ENCODE measurements at regions of chrX and their contacts with region 1.

Region 1: DNA sequence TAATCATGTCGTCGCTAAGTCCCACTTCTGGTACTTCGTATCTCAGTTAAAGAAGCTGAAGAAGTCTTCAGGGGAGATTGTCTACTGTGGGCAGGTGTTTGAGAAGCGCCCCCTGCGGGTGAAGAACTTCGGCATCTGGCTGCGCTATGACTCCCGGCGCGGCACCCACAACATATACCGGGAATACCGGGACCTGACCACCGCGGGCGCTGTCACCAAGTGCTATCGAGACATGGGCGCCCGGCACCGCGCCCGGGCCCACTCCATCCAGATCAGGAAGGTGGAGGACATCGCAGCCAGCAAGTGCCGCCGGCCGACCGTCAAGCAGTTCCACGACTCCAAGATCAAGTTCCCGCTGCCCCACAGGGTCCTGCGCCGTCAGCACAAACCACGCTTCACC is 11.3 kb downstream of the PNCK start:
- DNase-seq: peak; percentile 39
- H3K4me3 ChIP-seq: no peak overlapping the region
- H3K27ac ChIP-seq: no peak overlapping the region
- H3K4me1 ChIP-seq: no peaks in the 10 kb centered on the region
- H3K27me3 ChIP-seq: peaks cover 1 to 14% of the 10 kb centered on the region in 2 experiments
- CTCF ChIP-seq: peak; percentile 46 to 50
- POLR2A ChIP-seq: no peak

Region 2: DNA sequence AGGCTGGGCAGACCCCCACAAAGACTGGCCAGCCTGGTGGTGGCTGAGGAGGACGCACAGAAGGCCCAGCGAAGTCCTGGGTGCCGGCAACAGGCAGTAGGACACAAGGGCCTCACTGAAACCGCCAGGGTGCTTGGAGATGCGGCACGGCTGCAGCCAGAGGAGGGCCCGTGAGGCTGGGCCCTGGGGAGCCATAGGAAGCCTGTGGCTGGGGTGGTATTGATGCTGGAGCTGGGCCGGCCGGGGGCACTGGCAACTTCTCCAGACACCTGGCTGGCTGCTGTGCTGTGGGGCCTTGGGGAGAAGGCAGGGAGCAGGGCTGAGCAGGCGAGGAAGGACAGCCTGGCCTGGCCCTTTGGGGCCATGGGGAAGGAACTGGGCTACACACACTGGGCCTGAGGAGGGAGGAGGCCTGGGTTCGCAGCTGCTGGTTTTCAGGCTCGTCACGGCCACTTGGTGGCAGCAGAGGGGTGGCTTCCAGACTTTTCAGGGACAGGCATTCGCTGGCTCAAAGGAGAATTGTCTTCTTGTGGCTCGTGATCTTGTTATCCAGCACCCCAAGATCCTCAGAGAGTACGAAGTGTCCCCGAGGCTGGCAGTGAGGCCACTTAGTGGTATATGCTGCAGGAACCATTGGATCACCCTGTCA is 107.6 kb before region 1 on chrX:
- CTCF ChIA-PET with region 1: interaction called, 89 read pairs
- POLR2A ChIA-PET with region 1: no interaction called
- dilution Hi-C with region 1: no loop called
- intact Hi-C with region 1: no loop called
- DNase-seq: peak; percentile 24
- H3K4me3 ChIP-seq: no peak overlapping the region
- H3K27ac ChIP-seq: no peak overlapping the region
- H3K4me1 ChIP-seq: no peaks in the 10 kb centered on the region
- H3K27me3 ChIP-seq: no peaks in the 10 kb centered on the region
- CTCF ChIP-seq: peak; percentile 48 to 71
- POLR2A ChIP-seq: no peak

Region 3: GRCh38 chrX:155001873-155002272 is 1339.6 kb after region 1 on chrX:
- CTCF ChIA-PET with region 1: no interaction called
- POLR2A ChIA-PET with region 1: no interaction called
- dilution Hi-C with region 1: no loop called
- intact Hi-C with region 1: no loop called
- DNase-seq: no peak
- H3K4me3 ChIP-seq: no peak overlapping the region
- H3K27ac ChIP-seq: no peak overlapping the region
- H3K4me1 ChIP-seq: no peaks in the 10 kb centered on the region
- H3K27me3 ChIP-seq: no peaks in the 10 kb centered on the region
- CTCF ChIP-seq: no peak
- POLR2A ChIP-seq: no peak

Measured in endothelial cell of umbilical vein (primary cell).